ENCODE measurements at regions of chr19 and their contacts with region 1.

Region 1: GRCh38 chr19:49391581-49392399 is 3.7 kb downstream of the KASH5 start:
- DNase-seq: peak; percentile 87
- ATAC-seq: peak; percentile 91
- H3K4me3 Mint-ChIP-seq: no peak overlapping the region
- H3K27ac Mint-ChIP-seq: peak overlapping the region; percentile 58
- H3K4me1 Mint-ChIP-seq: peaks cover 30% of the 10 kb centered on the region
- H3K27me3 Mint-ChIP-seq: no peaks in the 10 kb centered on the region

Region 2: GRCh38 chr19:49331616-49332055 is 60.2 kb before region 1 on chr19:
- CTCF ChIA-PET with region 1: no interaction called
- DNase-seq: peak; percentile 81
- ATAC-seq: peak; percentile 76
- H3K4me3 Mint-ChIP-seq: no peak overlapping the region
- H3K27ac Mint-ChIP-seq: peak overlapping the region; percentile 54
- H3K4me1 Mint-ChIP-seq: peaks cover 67% of the 10 kb centered on the region
- H3K27me3 Mint-ChIP-seq: no peaks in the 10 kb centered on the region

Region 3: GRCh38 chr19:49421039-49421877 is 29.5 kb after region 1 on chr19:
- CTCF ChIA-PET with region 1: interaction called, 52 read pairs
- DNase-seq: peak; percentile 56
- ATAC-seq: peak; percentile 37
- H3K4me3 Mint-ChIP-seq: peak overlapping the region; percentile 2
- H3K27ac Mint-ChIP-seq: no peak overlapping the region
- H3K4me1 Mint-ChIP-seq: peaks cover 24% of the 10 kb centered on the region
- H3K27me3 Mint-ChIP-seq: peaks cover 89% of the 10 kb centered on the region

Region 4: GRCh38 chr19:49443366-49444099 is 51.7 kb after region 1 on chr19:
- CTCF ChIA-PET with region 1: interaction called, 27 read pairs
- DNase-seq: peak; percentile 96
- ATAC-seq: peak; percentile 85
- H3K4me3 Mint-ChIP-seq: peak overlapping the region; percentile 78
- H3K27ac Mint-ChIP-seq: peak overlapping the region; percentile 80
- H3K4me1 Mint-ChIP-seq: peaks cover 51% of the 10 kb centered on the region
- H3K27me3 Mint-ChIP-seq: peaks cover 36% of the 10 kb centered on the region

Measured in activated CD8-positive, alpha-beta memory T cell treated with anti-CD3 and anti-CD28 coated beads, Interleukin-2, amount 10 ng/mL, durations not matched to agents 7 days and 5 days (primary cell).